Activated CD8-positive, alpha-beta T cell treated with anti-CD3 and anti-CD28 coated beads for 36 hours (primary cell): ENCODE measurements at regions of chr6 and their contacts with region 1.

Region 1: GRCh38 chr6:75934643-75935472 is 137.6 kb downstream of the IMPG1 start:
- DNase-seq: peak; percentile 33
- ATAC-seq: peak; percentile 74
- H3K4me3 Mint-ChIP-seq: peak overlapping the region; percentile 31
- H3K27ac Mint-ChIP-seq: no peak overlapping the region
- H3K4me1 Mint-ChIP-seq: peaks cover 7% of the 10 kb centered on the region
- H3K27me3 Mint-ChIP-seq: peaks cover 31% of the 10 kb centered on the region
- CTCF ChIP-seq: peak; percentile 81

Region 2: GRCh38 chr6:75802366-75802765 is 132.5 kb before region 1 on chr6:
- CTCF ChIA-PET with region 1: no interaction called
- POLR2A ChIA-PET with region 1: no interaction called
- intact Hi-C with region 1: no loop called
- DNase-seq: no peak
- ATAC-seq: no peak
- H3K4me3 Mint-ChIP-seq: no peak overlapping the region
- H3K27ac Mint-ChIP-seq: no peak overlapping the region
- H3K4me1 Mint-ChIP-seq: no peaks in the 10 kb centered on the region
- H3K27me3 Mint-ChIP-seq: peaks cover 7% of the 10 kb centered on the region
- CTCF ChIP-seq: no peak

Region 3: DNA sequence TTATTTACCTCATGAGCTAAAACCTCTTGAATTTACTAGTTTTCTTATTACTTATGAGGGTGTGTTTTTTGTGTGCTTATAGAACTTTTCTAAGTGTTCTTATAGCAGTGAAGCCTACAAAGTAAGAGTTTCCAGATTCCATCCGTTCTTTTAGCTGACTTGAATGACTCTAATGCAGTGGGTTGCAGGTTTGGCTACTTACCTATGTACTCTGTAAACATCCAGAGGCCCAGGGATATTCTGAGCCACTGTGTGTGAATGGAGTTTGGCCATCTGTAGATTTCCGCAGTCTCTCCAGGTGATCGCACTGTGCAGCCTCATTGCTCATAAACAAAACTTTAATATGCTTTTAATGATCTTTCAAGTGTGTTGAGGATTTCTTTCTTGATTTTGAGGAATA is 28.0 kb before region 1 on chr6:
- CTCF ChIA-PET with region 1: no interaction called
- POLR2A ChIA-PET with region 1: no interaction called
- intact Hi-C with region 1: no loop called
- DNase-seq: no peak
- ATAC-seq: no peak
- H3K4me3 Mint-ChIP-seq: no peak overlapping the region
- H3K27ac Mint-ChIP-seq: no peak overlapping the region
- H3K4me1 Mint-ChIP-seq: no peaks in the 10 kb centered on the region
- H3K27me3 Mint-ChIP-seq: no peaks in the 10 kb centered on the region
- CTCF ChIP-seq: no peak

Region 4: DNA sequence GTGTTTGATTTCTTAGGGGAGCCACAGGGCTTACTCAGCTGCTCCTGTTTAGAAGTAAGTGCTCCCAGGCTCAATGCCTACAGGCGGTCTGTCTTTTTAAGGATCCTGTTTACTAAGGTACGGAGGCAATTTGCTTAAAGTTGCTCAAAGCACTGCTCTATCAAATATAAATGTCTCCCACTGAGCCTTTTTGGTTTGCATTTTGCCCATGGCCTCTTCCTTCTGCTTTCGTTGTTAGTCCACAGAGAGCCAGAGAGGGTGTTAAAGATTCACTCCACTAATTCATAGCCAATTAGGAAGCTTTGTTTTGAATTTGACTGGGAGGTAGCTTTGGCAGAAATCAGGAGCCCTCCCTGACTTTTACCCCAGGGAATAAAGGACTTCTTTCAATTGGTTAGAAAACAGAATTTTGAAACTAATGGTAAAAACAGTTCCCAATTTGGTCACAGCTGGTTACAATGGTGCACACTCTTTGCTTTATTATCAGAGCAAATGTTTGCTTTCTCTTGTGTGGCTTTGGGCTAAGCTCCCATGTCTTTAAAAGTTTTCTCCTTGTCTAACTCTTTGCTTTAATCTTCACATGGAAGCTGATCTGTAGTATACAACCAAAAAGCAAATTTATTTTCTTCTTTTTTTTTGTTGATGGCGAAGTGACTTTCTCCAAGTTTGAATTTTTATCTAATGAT is 11.4 kb after region 1 on chr6:
- CTCF ChIA-PET with region 1: interaction called, 10 read pairs
- POLR2A ChIA-PET with region 1: interaction called, 3 read pairs
- intact Hi-C with region 1: no loop called
- DNase-seq: no peak
- ATAC-seq: no peak
- H3K4me3 Mint-ChIP-seq: no peak overlapping the region
- H3K27ac Mint-ChIP-seq: no peak overlapping the region
- H3K4me1 Mint-ChIP-seq: no peaks in the 10 kb centered on the region
- H3K27me3 Mint-ChIP-seq: peaks cover 5% of the 10 kb centered on the region
- CTCF ChIP-seq: no peak

Region 5: DNA sequence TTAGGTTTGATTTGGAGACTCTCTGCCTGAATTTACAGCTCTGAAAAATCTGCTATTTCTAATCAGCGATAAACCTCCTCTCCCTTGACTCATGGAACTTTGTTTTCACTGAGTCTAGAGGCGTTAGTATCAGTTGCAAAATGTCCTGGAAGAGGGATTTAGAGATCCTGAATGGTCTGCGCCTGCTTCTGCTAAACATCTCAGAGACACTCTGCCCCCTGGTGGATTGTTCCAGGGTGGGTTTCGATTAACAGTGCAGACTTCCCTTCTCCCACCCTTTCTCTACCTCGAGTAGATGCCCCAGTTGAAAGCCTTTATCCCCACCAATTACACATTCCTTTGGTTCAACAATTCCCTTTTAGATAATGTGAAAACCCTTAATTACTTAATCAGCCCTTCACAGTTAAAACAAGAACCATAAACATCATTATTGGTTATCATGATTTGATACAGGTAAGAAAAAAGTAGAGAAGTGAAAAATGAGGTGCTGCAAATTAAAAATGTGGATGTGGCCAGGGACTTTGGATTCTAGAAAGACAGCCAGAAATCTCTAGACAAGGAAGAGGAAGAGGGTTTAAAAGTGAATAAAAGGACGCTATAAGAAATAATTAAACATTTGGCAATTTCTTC is 1523.0 kb after region 1 on chr6:
- CTCF ChIA-PET with region 1: interaction called, 9 read pairs
- POLR2A ChIA-PET with region 1: no interaction called
- intact Hi-C with region 1: loop called (anchors 5 kb)
- DNase-seq: peak; percentile 69
- ATAC-seq: no peak
- H3K4me3 Mint-ChIP-seq: no peak overlapping the region
- H3K27ac Mint-ChIP-seq: no peak overlapping the region
- H3K4me1 Mint-ChIP-seq: peaks cover 1% of the 10 kb centered on the region
- H3K27me3 Mint-ChIP-seq: peaks cover 29% of the 10 kb centered on the region
- CTCF ChIP-seq: peak; percentile 48